Upper lobe of right lung (tissue), 1 donor: ENCODE measurements at regions of chr1 and their contacts with region 1.

Region 1: GRCh38 chr1:204941421-204942338 is 71.0 kb downstream of the NFASC start:
- DNase-seq: peak; percentile 75
- ATAC-seq: peak; percentile 75
- H3K4me3 ChIP-seq: no peak overlapping the region
- H3K27ac ChIP-seq: no peak overlapping the region
- H3K4me1 ChIP-seq: peaks cover 4% of the 10 kb centered on the region
- H3K27me3 ChIP-seq: peaks cover 6% of the 10 kb centered on the region
- CTCF ChIP-seq: peak; percentile 84

Region 2: GRCh38 chr1:204806943-204807687 is 134.6 kb before region 1 on chr1:
- intact Hi-C with region 1: loop called (anchors 5 kb)
- DNase-seq: peak; percentile 87
- ATAC-seq: peak; percentile 96
- H3K4me3 ChIP-seq: peak overlapping the region; percentile 48
- H3K27ac ChIP-seq: no peak overlapping the region
- H3K4me1 ChIP-seq: no peaks in the 10 kb centered on the region
- H3K27me3 ChIP-seq: no peaks in the 10 kb centered on the region
- CTCF ChIP-seq: peak; percentile 94